MCF 10A (cell line): ENCODE measurements at regions of chr3 and their contacts with region 1.

Region 1: GRCh38 chr3:116037954-116038911 is 407.1 kb downstream of the LSAMP start:
- DNase-seq: no peak
- H3K4me3 Mint-ChIP-seq: no peak overlapping the region
- H3K27ac Mint-ChIP-seq: peak overlapping the region; percentile 73
- H3K4me1 Mint-ChIP-seq: peaks cover 15% of the 10 kb centered on the region
- H3K27me3 Mint-ChIP-seq: no peaks in the 10 kb centered on the region
- CTCF ChIP-seq: no peak

Region 2: GRCh38 chr3:116059421-116060096 is 21.3 kb after region 1 on chr3:
- CTCF ChIA-PET with region 1: no interaction called
- POLR2A ChIA-PET with region 1: interaction called, 10 read pairs
- intact Hi-C with region 1: no loop called
- DNase-seq: peak; percentile 87
- H3K4me3 Mint-ChIP-seq: no peak overlapping the region
- H3K27ac Mint-ChIP-seq: peak overlapping the region; percentile 62
- H3K4me1 Mint-ChIP-seq: peaks cover 8% of the 10 kb centered on the region
- H3K27me3 Mint-ChIP-seq: no peaks in the 10 kb centered on the region
- CTCF ChIP-seq: no peak